ENCODE measurements at regions of chr2 and their contacts with region 1.

Region 1: DNA sequence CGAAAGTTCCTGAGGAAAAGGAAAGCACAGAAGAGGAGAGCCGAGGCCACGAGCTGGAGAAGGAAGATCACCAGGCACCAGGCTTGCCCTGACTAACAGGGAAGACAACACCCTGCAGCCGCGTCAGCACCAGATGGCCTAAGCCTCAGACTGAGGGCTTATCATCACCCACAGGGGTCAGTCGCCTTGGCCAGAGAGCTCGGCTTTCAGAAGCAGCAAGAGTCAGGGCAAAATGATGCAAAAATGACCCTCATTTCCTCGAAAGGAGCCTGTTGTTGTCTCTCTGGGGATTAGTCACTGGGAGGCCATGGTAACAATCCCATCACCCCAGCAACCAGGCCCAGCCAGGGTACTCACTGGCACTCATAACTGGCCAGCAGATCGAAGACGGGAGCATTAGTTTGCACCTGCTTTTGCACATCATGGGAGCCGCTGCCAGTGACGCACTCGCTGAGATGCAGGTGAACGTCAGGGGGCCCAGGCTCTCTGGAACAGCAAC is 42.7 kb upstream of the ZFP36L2 start:
- DNase-seq: peak; percentile 74

Region 2: DNA sequence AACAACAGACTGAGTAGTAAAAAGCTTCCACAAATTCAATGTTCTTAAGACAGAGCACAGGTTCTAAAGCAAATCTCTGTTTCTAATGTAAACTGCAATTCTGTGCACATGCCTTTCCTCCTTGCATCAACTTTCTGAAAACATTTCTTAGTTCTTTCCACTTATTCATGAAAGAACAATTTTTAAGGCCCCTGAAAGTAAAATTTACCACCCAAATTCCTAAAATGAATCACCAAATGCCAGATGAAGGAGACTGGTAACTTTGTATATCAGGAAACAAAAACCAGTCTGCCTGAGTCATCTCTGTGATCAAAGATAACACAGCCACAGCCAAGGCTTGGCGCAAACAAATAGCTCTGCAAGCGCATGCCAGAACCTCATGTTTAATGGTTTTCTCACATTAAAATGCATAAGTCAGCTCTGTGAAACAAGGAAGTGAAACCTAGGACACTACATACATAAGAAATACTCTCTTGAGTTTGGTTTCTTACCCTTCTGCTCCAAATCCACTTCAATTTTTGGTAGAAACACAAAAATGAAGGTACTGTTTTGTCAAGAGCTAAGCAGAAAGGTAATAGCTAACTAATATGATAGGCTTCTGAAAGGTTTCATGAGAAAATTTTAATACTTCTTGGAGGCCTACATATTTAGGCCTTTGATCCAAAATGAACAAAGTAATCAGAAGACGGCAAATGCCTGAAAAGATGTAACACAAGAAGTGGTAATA is 157.3 kb after region 1 on chr2:
- in situ Hi-C with region 1: no loop called
- DNase-seq: peak; percentile 74

Region 3: GRCh38 chr2:43461453-43462073 is 192.4 kb after region 1 on chr2:
- in situ Hi-C with region 1: loop called (anchors 25 kb)
- DNase-seq: no peak

Measured in ACHN (cell line).